ENCODE measurements at regions of chr3 and their contacts with region 1.

Region 1: DNA sequence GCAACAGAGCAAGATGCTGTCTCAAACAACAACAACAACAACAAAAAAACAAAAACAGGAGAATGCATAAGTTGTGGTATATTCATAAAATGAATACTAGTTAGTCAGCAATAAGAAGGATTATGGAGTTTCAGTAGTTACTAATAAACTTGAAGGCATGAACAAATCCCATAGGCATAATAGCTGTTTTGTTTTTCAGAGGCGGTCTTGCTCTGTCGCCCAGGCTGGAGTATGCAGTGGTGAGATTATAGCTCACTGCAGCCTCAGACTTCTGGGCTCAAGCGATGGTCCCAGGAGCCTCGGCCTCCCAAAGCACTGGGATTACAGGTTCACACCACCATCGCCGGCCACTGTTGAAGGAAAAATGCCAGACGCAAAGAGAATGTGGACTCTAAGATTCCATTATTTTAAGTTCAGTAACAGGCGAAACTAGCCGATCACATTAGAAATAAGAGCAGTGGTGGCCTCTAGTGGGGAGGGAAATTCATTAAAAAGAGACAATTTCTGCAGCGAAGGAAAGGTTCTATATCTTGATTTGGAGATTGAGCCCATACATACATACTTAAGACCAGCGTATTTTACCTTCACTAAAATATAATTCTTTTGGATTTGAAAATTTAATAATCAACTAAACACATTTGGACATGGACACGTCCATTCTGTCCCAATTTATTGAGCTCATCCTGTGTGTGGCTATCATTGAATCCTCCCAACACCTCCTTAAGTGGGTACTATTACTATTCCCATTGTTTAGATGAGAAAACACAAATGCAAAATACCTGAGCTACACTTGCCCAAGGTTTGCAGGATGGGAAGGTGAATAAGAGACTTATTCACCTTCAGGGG is 27.4 kb upstream of the HDAC11 start:
- DNase-seq: peak in 11 of 14 experiments; percentile 14 to 78 (median 32)
- ATAC-seq: peak; percentile 22
- H3K4me3 ChIP-seq: peak overlapping the region; percentile 71
- H3K4me3 Mint-ChIP-seq: peak overlapping the region; percentile 94
- H3K27ac ChIP-seq: peak overlapping the region in 1 of 2 donors; percentile 72
- H3K27ac Mint-ChIP-seq: peak overlapping the region; percentile 79
- H3K4me1 ChIP-seq: peaks cover 21% of the 10 kb centered on the region
- H3K4me1 Mint-ChIP-seq: peaks cover 28% of the 10 kb centered on the region
- H3K27me3 ChIP-seq: no peaks in the 10 kb centered on the region
- H3K27me3 Mint-ChIP-seq: no peaks in the 10 kb centered on the region
- CTCF ChIP-seq: peak; percentile 79

Region 2: DNA sequence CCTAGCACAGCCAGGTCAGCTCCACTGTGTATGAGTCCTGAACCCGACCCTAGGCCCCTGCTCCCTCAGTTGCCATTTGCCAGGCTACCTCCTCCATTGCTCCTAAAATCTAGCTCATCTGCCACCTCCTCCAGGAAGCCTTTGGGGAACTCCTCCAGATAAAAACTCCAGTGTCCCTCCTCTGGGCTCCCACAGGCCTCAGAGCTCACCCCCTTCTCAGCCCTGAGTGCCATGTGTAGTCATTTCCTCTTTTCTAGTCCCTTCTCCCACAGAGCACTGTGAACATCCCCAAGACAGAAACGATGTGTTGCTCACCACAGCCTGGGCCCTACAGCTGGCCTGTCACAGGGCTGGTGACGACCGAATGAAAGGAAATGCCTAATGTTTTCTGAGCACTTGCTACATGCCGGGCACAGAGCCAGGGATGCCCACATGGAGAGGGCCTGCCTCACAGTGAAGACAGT is 440.5 kb before region 1 on chr3:
- CTCF ChIA-PET with region 1: no interaction called
- POLR2A ChIA-PET with region 1: no interaction called
- intact Hi-C with region 1: loop called in 1 of 2 experiments (anchors 10 kb)
- DNase-seq: peak in 11 of 14 experiments; percentile 15 to 86 (median 30)
- ATAC-seq: no peak
- H3K4me3 ChIP-seq: peak overlapping the region; percentile 63
- H3K4me3 Mint-ChIP-seq: peak overlapping the region; percentile 84
- H3K27ac ChIP-seq: peak overlapping the region; percentile 87 to 99
- H3K27ac Mint-ChIP-seq: peak overlapping the region; percentile 98
- H3K4me1 ChIP-seq: peaks cover 100% of the 10 kb centered on the region
- H3K4me1 Mint-ChIP-seq: peaks cover 93% of the 10 kb centered on the region
- H3K27me3 ChIP-seq: no peaks in the 10 kb centered on the region
- H3K27me3 Mint-ChIP-seq: no peaks in the 10 kb centered on the region
- CTCF ChIP-seq: no peak

Region 3: DNA sequence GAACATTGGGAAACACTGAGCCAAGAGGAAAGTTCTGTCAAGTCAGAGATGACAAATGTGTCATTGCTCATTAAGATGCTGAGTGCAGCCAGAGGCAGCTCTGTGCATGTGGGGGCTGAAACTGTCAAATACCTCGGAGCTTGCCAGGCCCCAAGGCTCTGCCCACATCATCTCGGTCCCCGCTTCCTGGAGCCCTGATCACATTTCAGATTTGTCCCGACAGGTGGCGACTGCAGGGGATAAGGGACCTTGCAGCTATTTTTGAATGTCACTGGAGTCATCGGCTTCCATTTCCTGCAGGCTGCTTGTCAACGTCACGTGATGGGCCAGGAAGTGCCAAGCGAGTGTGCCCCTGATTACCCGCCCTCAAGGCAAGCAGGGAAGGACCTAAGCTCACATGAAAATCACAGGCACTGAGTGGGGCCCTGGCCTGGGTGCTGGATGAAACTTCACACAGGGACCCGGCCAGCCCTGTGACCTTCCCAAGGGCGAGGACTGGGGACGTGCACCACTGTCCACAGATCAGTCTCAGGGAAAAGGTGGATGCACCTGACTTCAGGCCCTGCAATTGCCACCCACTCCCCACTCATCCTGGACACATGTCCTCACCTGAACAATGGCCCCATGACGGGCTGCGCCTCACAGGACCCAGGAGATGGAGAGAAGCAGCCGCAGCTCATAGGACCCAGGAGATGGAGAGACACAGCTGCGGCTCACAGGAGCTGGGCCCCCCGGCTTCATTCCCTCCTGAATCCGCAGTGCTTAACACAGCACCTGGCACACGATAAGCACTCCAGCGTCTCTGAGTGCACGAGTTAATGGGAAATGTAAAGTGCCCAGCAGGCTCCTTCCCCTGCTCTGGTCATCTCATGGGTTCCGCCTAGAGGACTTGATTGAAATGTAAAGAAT is 106.0 kb before region 1 on chr3:
- CTCF ChIA-PET with region 1: interaction called, 45 read pairs
- POLR2A ChIA-PET with region 1: interaction called, 73 read pairs
- intact Hi-C with region 1: loop called (anchors 1 kb)
- DNase-seq: peak; percentile 60 to 91 (median 73)
- ATAC-seq: peak; percentile 85
- H3K4me3 ChIP-seq: no peak overlapping the region
- H3K4me3 Mint-ChIP-seq: peak overlapping the region; percentile 68
- H3K27ac ChIP-seq: peak overlapping the region; percentile 39 to 54
- H3K27ac Mint-ChIP-seq: peak overlapping the region; percentile 85
- H3K4me1 ChIP-seq: peaks cover 44% of the 10 kb centered on the region
- H3K4me1 Mint-ChIP-seq: peaks cover 54% of the 10 kb centered on the region
- H3K27me3 ChIP-seq: no peaks in the 10 kb centered on the region
- H3K27me3 Mint-ChIP-seq: no peaks in the 10 kb centered on the region
- CTCF ChIP-seq: peak; percentile 51

Region 4: DNA sequence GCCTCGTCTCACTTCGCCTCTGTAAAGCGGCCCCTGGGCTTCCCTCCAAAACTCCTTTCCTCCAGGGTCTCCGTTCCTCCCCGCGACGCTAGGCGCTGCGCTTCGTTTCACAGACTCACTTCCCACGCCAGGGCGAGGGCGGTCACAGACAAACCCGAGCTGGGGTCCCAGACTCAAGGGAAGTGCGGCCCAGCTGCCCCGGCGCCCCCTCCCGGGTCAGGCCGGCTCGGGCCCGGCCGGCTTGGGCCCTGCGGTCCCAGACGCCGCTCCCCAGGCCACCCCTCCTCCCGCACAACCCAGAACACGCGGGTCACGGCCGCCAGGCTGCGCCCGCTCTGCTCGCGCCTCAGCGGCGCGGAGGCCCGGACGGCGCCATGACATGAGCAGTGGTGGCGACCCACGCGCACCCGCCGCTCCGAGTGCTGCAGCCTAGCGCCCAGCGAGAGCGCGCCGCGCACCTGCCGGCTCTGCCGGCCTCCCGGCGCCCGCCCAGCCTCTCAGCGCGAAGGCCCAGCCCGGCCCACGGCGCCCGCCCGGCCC is 33.1 kb before region 1 on chr3:
- CTCF ChIA-PET with region 1: interaction called, 57 read pairs
- POLR2A ChIA-PET with region 1: interaction called, 75 read pairs
- intact Hi-C with region 1: loop called (anchors 1 to 2 kb)
- DNase-seq: peak; percentile 27 to 88 (median 58)
- ATAC-seq: peak; percentile 38
- H3K4me3 ChIP-seq: peak overlapping the region; percentile 85
- H3K4me3 Mint-ChIP-seq: peak overlapping the region; percentile 93
- H3K27ac ChIP-seq: peak overlapping the region; percentile 80 to 89
- H3K27ac Mint-ChIP-seq: peak overlapping the region; percentile 91
- H3K4me1 ChIP-seq: peaks cover 73% of the 10 kb centered on the region
- H3K4me1 Mint-ChIP-seq: peaks cover 71% of the 10 kb centered on the region
- H3K27me3 ChIP-seq: no peaks in the 10 kb centered on the region
- H3K27me3 Mint-ChIP-seq: no peaks in the 10 kb centered on the region
- CTCF ChIP-seq: no peak

Measured in CD4-positive, alpha-beta T cell (primary cell).